Calu3 (cell line): ENCODE measurements at regions of chr3 and their contacts with region 1.

Region 1: DNA sequence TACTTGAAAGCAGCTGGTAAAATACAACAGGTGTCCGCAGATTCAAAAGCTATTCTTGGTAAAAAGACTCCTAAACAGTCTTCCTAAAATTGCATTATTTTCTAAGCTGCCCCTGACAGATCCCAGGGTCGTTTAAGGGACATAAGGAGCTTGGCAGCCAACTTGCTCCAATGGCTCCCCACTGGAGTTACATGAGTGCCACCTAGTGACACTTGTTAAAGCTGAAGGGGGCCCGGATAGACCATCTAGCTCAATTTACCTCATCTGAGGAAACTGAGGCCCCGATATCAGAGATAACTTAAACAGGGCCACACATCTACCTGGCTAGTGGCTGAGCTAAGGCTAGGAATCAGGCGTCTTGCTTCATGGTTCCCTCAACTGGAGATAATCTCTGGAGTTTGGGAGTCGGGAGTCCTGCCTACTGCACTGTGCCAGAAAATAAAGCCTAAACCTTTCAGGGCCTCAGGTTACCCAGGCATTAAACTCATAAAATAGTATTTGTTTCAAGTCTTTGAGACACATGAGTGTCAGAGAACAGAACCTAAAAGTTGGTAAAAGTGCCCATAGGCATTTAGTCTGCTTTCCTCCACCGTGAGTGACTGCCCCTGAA is 6.5 kb upstream of the TBC1D23 start:
- DNase-seq: peak; percentile 63
- H3K4me3 Mint-ChIP-seq: no peak overlapping the region
- H3K27ac Mint-ChIP-seq: no peak overlapping the region
- H3K4me1 Mint-ChIP-seq: no peaks in the 10 kb centered on the region
- H3K27me3 Mint-ChIP-seq: no peaks in the 10 kb centered on the region
- CTCF ChIP-seq: peak; percentile 72

Region 2: DNA sequence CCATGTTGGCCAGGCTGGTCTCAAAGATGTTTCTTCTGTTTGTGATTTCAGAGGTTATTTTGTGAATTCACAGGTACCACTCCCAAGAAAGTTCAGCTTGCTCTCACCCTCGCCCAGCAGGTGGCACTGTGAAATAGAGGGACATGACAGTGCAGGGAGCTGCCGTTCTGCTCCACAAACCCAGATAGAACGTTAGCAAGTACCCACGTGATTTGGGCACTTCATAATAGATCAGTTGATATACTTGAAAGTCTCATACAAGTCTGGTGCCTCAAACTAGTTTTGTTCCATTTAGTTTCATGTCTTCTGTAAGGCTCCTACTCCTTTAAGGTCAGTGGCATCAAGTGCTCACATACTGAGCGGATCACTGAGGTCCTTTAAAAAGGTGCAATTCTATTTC is 185.4 kb before region 1 on chr3:
- CTCF ChIA-PET with region 1: interaction called, 28 read pairs
- intact Hi-C with region 1: loop called (anchors 1 kb)
- DNase-seq: peak; percentile 79
- H3K4me3 Mint-ChIP-seq: no peak overlapping the region
- H3K27ac Mint-ChIP-seq: no peak overlapping the region
- H3K4me1 Mint-ChIP-seq: no peaks in the 10 kb centered on the region
- H3K27me3 Mint-ChIP-seq: no peaks in the 10 kb centered on the region
- CTCF ChIP-seq: peak; percentile 46

Region 3: DNA sequence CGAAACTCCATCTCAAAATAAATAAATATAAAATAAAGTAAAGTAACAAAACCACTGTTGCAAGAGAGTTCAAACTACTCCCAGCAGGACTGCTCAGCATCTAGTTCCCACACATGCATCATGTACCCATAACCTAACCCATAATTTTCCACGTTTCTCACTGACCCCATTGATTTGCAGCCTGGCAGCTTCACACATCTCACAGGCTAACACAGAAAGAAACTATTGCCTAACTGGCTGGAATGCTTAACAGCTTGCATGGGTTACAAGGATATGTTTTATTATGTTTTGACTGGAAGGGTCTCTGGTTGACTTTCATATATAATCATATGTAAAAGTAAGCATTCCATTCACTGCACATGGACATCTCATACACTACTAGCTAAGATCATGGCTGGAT is 49.1 kb before region 1 on chr3:
- CTCF ChIA-PET with region 1: no interaction called
- intact Hi-C with region 1: no loop called
- DNase-seq: no peak
- H3K4me3 Mint-ChIP-seq: no peak overlapping the region
- H3K27ac Mint-ChIP-seq: no peak overlapping the region
- H3K4me1 Mint-ChIP-seq: no peaks in the 10 kb centered on the region
- H3K27me3 Mint-ChIP-seq: no peaks in the 10 kb centered on the region
- CTCF ChIP-seq: no peak

Region 4: DNA sequence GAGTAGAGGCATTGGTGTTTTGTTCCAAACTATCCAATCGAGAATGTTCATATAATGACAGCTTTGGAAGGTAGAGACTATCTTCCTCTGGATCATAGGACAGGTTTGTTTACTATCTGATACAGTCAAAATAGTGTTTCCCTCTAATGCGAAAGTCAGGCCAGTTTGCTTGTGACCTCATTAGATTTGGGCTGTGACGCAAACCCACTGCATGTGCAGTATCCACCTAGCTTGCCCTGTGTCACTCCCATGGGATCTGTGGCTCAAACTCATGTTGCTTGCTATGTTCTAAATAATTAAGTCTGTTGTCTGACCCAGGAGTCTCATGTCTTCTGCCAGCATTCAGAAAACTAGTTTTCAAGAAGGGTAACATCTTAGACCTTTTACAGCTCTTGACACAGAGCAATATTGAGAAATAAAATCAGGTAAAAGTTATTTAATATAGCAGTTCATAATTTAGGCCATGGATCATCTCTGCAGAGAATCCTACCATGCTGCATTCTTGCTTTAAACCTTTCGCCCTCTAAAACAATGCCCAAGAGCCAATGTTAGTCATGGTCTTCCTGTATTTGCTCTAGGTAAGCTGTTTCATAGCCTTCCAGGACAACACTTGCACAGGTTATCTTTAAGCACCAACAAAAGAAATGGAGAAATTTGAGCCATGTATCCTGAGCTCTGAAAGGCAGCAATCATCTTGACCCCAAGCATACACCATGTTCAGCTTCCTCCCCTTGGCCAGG is 106.7 kb after region 1 on chr3:
- CTCF ChIA-PET with region 1: no interaction called
- intact Hi-C with region 1: no loop called
- DNase-seq: no peak
- H3K4me3 Mint-ChIP-seq: no peak overlapping the region
- H3K27ac Mint-ChIP-seq: no peak overlapping the region
- H3K4me1 Mint-ChIP-seq: no peaks in the 10 kb centered on the region
- H3K27me3 Mint-ChIP-seq: no peaks in the 10 kb centered on the region
- CTCF ChIP-seq: no peak